ENCODE measurements at regions of chr14 and their contacts with region 1.

Region 1: DNA sequence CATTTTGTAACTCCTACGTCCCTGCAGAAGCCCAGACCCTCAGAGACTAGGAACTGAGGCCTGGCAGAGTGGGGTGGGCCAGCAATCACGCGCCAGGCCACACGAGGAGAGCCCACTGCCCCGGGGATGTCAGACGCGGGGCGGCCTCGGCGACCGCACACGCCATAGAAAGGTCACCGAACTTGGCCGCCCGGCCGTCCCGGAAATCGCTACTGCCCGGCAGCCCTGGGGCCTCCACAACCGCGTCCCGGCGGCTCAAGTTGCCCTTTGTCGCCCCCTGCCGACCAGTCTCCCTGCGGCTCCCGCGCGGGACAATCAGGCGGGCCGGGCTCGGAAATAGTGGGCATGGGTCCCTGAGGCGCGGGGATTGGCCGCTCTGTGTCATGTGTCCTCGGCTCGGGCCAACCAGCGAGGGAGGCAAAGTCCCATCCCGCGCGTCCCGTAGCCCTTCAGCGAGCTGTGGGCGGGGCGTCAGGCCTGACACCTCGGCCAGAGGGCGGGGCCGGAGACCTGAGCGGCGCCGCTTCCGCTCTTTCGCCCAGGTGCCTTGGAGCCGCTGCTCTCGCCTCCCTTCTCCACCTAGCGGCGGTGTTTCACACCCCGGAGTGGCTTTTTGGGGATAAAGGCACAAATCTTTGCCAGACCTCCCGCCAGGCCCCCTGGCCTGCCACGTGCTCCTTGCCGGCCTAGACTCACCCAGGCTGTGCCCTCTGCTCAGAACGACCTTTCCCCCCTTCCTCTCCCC is 33.4 kb upstream of the DEGS2 start:
- DNase-seq: peak; percentile 100
- ATAC-seq: peak; percentile 100
- H3K4me3 Mint-ChIP-seq: peak overlapping the region; percentile 52
- H3K27ac Mint-ChIP-seq: peak overlapping the region; percentile 89
- H3K4me1 Mint-ChIP-seq: peaks cover 20% of the 10 kb centered on the region
- H3K27me3 Mint-ChIP-seq: no peaks in the 10 kb centered on the region

Region 2: GRCh38 chr14:99971087-99971940 is 221.5 kb before region 1 on chr14:
- CTCF ChIA-PET with region 1: interaction called, 11 read pairs
- POLR2A ChIA-PET with region 1: no interaction called
- DNase-seq: peak; percentile 86
- ATAC-seq: peak; percentile 87
- H3K4me3 Mint-ChIP-seq: peak overlapping the region; percentile 56
- H3K27ac Mint-ChIP-seq: no peak overlapping the region
- H3K4me1 Mint-ChIP-seq: peaks cover 13% of the 10 kb centered on the region
- H3K27me3 Mint-ChIP-seq: peaks cover 17% of the 10 kb centered on the region

Region 3: DNA sequence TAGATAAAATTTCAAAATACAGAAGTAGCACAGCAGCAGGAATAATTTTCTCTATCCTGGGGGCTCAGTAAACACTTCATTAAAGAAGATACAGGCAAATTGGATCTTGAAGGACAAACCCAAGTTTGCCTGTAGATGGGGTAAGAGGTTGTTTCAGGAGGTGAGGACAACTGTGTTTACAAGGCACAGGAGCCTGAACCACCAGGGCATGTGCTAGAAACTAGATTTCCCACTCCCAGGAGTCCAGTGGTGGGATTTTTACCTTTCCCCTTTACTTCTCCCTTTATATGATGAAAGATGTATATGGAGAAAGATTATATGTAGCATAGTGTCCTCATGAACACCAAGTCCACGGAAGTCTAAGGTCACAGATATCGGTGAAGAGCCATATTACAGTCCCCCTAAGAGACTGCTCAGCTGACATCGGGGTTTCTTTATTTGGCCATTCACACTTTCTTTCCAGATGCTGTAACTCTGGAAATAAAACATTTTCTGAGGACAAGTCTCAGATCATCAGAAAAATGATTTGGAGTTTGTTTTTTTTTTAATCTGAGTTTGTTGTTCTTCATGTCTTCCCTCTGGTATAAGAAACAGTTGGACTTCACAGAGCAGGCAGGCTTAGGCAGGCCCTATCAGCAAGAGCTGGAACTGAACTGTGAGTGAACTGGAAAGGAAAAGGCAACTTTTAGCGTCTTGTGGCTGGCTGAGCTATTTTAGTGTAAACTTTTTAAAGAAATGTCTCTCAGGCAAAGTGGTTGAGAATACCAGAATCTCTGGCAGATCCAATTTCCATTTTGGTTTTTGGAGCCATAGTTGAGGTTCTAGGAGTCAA is 135.7 kb before region 1 on chr14:
- CTCF ChIA-PET with region 1: interaction called, 18 read pairs
- POLR2A ChIA-PET with region 1: no interaction called
- DNase-seq: peak; percentile 40
- ATAC-seq: peak; percentile 55
- H3K4me3 Mint-ChIP-seq: no peak overlapping the region
- H3K27ac Mint-ChIP-seq: peak overlapping the region; percentile 74
- H3K4me1 Mint-ChIP-seq: peaks cover 70% of the 10 kb centered on the region
- H3K27me3 Mint-ChIP-seq: no peaks in the 10 kb centered on the region

Region 4: DNA sequence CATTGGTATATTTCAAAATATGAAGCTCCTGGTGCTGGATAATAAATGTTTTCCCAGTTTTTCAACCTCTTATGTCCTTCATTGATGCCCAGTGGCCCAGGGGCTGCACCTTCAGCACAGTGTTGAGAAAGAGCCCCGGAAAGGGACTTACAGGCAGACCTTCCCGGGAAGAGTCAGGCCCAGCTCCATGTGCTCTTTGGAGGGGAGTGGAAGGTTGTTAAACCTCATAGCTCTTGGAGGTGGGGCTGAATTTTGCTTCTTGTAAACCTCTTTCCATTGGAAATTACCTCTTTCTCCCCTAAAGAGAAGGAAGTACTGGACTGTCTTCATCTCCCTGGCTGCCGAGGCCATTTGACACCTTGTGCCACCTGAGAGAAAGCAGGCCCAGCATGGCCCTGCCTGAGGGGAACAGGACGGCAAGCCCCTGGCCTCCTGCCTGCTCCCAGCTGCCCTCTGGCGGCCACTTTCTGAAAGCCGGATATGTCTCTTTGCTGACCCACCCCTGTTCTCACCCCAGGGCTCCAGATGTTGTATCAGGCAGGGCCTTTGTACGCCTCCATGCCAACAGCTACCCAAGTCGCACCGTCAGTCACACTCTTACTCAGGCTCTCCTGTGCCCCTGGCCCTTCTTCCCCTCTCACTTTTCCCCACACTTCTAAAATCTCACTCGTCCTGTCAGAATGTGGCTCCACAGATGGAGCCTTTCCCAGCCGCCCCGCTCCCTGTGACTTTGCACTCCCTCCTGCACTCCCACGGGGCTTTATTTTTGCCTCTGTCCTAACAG is 84.6 kb before region 1 on chr14:
- CTCF ChIA-PET with region 1: interaction called, 24 read pairs
- POLR2A ChIA-PET with region 1: no interaction called
- DNase-seq: peak; percentile 89
- ATAC-seq: peak; percentile 66
- H3K4me3 Mint-ChIP-seq: no peak overlapping the region
- H3K27ac Mint-ChIP-seq: peak overlapping the region; percentile 86
- H3K4me1 Mint-ChIP-seq: peaks cover 82% of the 10 kb centered on the region
- H3K27me3 Mint-ChIP-seq: no peaks in the 10 kb centered on the region

Region 5: GRCh38 chr14:100165376-100165775 is 27.5 kb before region 1 on chr14:
- CTCF ChIA-PET with region 1: interaction called, 12 read pairs
- POLR2A ChIA-PET with region 1: no interaction called
- DNase-seq: no peak
- ATAC-seq: no peak
- H3K4me3 Mint-ChIP-seq: no peak overlapping the region
- H3K27ac Mint-ChIP-seq: no peak overlapping the region
- H3K4me1 Mint-ChIP-seq: peaks cover 12% of the 10 kb centered on the region
- H3K27me3 Mint-ChIP-seq: peaks cover 21% of the 10 kb centered on the region

Region 6: DNA sequence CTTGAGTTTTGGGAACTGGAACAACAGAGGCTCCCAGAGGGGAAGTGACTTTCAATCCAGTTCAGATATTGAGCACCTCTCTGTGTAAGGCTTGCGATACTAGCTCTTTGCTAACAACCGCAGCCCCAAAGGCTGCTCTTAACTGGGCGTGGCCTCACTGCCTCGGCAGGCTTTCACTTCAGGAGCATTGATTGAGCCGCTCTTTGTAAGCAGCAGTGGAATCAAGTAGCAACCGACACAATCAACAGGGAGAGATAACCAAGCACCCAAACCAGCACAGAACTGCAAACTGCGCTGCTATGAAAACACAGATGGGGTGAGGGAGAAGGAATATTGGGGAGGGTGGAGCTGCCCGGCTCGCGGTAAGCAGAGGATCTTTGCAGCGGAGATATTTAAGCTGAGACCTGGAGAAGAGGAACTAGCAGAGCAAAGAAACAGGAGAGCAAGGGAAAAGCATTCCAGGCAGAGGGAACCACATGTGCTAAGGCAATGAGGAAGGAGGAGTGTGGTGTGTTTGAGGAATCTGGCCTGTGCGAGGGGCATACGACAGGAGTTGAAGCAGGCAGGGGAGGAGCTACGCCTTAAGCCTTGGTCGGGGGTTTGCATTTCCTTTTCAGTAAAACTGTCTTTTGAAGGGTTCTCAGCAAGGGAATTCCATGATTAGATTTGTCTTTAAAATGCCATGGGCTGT is 28.8 kb after region 1 on chr14:
- CTCF ChIA-PET with region 1: interaction called, 64 read pairs
- POLR2A ChIA-PET with region 1: interaction called, 31 read pairs
- DNase-seq: peak; percentile 86
- ATAC-seq: peak; percentile 94
- H3K4me3 Mint-ChIP-seq: no peak overlapping the region
- H3K27ac Mint-ChIP-seq: no peak overlapping the region
- H3K4me1 Mint-ChIP-seq: peaks cover 16% of the 10 kb centered on the region
- H3K27me3 Mint-ChIP-seq: no peaks in the 10 kb centered on the region

Measured in activated CD8-positive, alpha-beta T cell treated with anti-CD3 and anti-CD28 coated beads, Interleukin-2, amount 10 ng/mL, durations not matched to agents 7 days and 5 days (primary cell).